Activated B cell treated with CpG ODN at 0.5 μM for 24 hours (primary cell): ENCODE measurements at regions of chr2 and their contacts with region 1.

Region 1: GRCh38 chr2:97806738-97807618 is 93.6 kb downstream of the ZAP70 start:
- DNase-seq: peak; percentile 68
- ATAC-seq: peak; percentile 96
- H3K4me3 Mint-ChIP-seq: no peak overlapping the region
- H3K27ac Mint-ChIP-seq: no peak overlapping the region
- H3K4me1 Mint-ChIP-seq: no peaks in the 10 kb centered on the region
- H3K27me3 Mint-ChIP-seq: no peaks in the 10 kb centered on the region
- CTCF ChIP-seq: peak; percentile 33

Region 2: DNA sequence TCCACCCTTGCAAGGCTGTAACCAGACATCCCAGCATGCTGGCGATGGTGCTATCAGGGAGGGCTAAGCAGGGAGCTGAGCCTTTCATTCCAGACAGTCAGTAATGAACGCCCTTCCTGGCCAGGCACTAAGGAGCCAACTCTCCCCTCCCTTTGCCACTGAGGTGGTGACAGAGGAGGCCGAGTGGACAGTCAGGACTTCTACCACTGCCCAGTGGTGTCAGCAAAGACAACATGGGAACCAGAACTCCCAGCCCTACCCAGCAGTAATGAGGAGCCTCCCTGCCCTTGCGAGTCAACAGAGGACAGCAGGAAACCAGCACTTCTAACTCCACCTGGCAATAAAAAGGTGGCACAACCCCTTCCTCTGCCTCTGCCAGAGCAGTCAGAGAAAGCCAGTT is 25.0 kb before region 1 on chr2:
- CTCF ChIA-PET with region 1: interaction called, 3 read pairs
- POLR2A ChIA-PET with region 1: no interaction called
- intact Hi-C with region 1: loop called (anchors 1 kb)
- DNase-seq: no peak
- ATAC-seq: no peak
- H3K4me3 Mint-ChIP-seq: no peak overlapping the region
- H3K27ac Mint-ChIP-seq: no peak overlapping the region
- H3K4me1 Mint-ChIP-seq: peaks cover 3% of the 10 kb centered on the region
- H3K27me3 Mint-ChIP-seq: no peaks in the 10 kb centered on the region
- CTCF ChIP-seq: no peak

Region 3: GRCh38 chr2:98086491-98087446 is 279.8 kb after region 1 on chr2 and contains the start of gene VWA3B:
- CTCF ChIA-PET with region 1: interaction called, 3 read pairs
- POLR2A ChIA-PET with region 1: no interaction called
- intact Hi-C with region 1: loop called (anchors 2 kb)
- DNase-seq: peak; percentile 83
- ATAC-seq: peak; percentile 93
- H3K4me3 Mint-ChIP-seq: peak within 1 kb of the TSS; percentile 89
- H3K27ac Mint-ChIP-seq: peak within 1 kb of the TSS; percentile 81
- H3K4me1 Mint-ChIP-seq: peaks cover 49% of the 10 kb centered on the region
- H3K27me3 Mint-ChIP-seq: no peaks in the 10 kb centered on the region
- CTCF ChIP-seq: no peak
- total RNA-seq, gene VWA3B: not detected in 2 replicates

Region 4: GRCh38 chr2:98175811-98176210 is 368.8 kb after region 1 on chr2:
- CTCF ChIA-PET with region 1: interaction called, 35 read pairs
- POLR2A ChIA-PET with region 1: interaction called, 3 read pairs
- intact Hi-C with region 1: loop called (anchors 1 kb)
- DNase-seq: no peak
- ATAC-seq: peak; percentile 61
- H3K4me3 Mint-ChIP-seq: no peak overlapping the region
- H3K27ac Mint-ChIP-seq: no peak overlapping the region
- H3K4me1 Mint-ChIP-seq: peaks cover 3% of the 10 kb centered on the region
- H3K27me3 Mint-ChIP-seq: peaks cover 17% of the 10 kb centered on the region
- CTCF ChIP-seq: no peak

Region 5: GRCh38 chr2:98269274-98269673 is 462.3 kb after region 1 on chr2:
- CTCF ChIA-PET with region 1: interaction called, 35 read pairs
- POLR2A ChIA-PET with region 1: no interaction called
- intact Hi-C with region 1: loop called (anchors 1 kb)
- DNase-seq: no peak
- ATAC-seq: peak; percentile 75
- H3K4me3 Mint-ChIP-seq: no peak overlapping the region
- H3K27ac Mint-ChIP-seq: no peak overlapping the region
- H3K4me1 Mint-ChIP-seq: no peaks in the 10 kb centered on the region
- H3K27me3 Mint-ChIP-seq: peaks cover 7% of the 10 kb centered on the region
- CTCF ChIP-seq: no peak